ENCODE measurements at regions of chr17 and their contacts with region 1.

Region 1: GRCh38 chr17:76506408-76507349 is 5.5 kb upstream of the RHBDF2 start:
- DNase-seq: peak; percentile 90
- H3K4me3 ChIP-seq: no peak overlapping the region
- H3K27ac ChIP-seq: peak overlapping the region; percentile 31
- H3K4me1 ChIP-seq: peaks cover 48% of the 10 kb centered on the region
- CTCF ChIP-seq: peak; percentile 100

Region 2: GRCh38 chr17:76304226-76305134 is 202.2 kb before region 1 on chr17:
- CTCF ChIA-PET with region 1: no interaction called
- POLR2A ChIA-PET with region 1: no interaction called
- intact Hi-C with region 1: loop called (anchors 1 kb)
- DNase-seq: no peak
- H3K4me3 ChIP-seq: no peak overlapping the region
- H3K27ac ChIP-seq: no peak overlapping the region
- H3K4me1 ChIP-seq: peaks cover 5% of the 10 kb centered on the region
- CTCF ChIP-seq: no peak

Region 3: DNA sequence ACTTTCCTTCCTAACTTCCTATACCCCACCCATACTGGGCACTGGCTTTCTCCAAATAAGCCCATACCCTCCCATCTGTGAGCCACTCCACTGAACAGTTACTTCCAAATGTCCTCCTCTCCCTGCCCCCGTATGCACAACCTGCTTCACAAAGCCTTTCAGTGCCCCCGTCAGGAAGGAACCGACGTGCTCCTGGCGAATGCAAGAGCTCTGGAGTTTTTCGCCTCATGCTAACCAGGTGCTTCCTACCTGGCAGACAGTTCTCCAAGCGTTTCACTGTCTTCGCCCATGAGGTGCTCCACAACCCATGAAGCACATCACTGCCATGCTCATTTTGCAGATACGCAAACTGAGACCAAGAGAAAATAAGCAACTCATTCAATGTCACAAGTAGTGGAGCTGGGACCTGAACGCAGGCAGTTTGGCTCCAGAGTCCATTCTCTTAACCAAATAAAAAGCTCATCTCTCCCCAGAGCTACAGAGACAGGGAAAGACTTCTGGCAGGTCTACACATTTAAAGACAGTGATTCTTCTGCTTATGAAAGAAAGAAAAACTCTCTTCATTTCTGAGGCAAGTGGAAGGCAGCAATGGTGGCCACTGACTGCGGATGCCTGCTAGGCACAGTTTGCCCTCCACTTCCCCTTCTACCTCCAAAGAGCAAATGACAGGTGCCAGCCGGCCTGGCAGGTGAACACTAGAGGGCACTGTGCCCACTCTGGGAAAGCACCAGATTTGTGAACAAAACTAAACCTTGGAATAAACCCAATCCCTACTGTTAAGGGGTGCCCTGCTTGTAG is 98.4 kb before region 1 on chr17:
- CTCF ChIA-PET with region 1: interaction called, 4 read pairs
- POLR2A ChIA-PET with region 1: interaction called, 14 read pairs
- intact Hi-C with region 1: loop called (anchors 1 kb)
- DNase-seq: peak; percentile 89
- H3K4me3 ChIP-seq: no peak overlapping the region
- H3K27ac ChIP-seq: peak overlapping the region; percentile 1
- H3K4me1 ChIP-seq: peaks cover 48% of the 10 kb centered on the region
- CTCF ChIP-seq: peak; percentile 100

Region 4: DNA sequence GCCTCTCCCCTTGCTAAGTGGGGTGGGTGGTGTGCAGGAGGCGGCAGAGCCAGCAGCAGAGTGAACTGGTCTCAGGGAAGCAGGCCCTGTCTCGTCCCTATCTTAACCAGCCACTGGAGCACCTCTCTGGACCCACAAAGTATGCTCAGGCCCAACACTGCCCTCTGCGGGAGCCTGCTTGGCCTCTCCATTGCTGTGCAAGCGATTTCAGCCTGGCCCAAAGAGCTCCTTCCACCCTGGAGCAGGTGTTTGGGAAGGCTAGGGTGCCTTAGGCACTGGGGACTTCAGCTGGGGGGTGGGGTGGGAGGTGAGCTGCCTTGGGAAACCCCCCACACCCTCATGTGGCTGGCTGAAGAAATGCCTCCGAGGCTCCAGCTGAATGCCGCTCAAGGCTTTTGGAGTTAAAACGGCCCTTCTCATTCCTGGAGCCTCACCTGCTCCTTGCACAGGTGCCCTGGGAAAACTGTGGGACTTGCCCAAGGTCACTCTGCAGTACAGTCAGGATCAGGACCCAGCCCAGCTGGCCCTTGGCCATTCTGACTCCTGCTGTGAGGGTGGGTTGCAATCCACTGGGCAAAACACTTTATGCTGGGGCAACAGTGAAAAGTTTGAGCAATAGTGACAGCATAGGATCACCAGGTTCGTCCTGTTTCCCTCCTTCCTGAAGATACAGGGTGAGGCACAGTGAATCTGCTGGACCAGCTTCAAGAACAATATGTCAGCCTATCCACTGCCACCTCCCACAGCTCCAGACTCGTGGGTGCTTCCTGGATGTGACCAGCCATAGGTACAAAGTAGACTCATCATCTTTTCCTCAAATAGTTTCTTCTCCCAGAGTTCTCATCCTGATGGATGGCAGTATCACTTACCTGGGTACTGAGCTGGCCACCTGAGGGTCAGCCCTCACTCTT is 47.8 kb before region 1 on chr17:
- CTCF ChIA-PET with region 1: interaction called, 28 read pairs
- POLR2A ChIA-PET with region 1: interaction called, 13 read pairs
- intact Hi-C with region 1: loop called (anchors 1 kb)
- DNase-seq: peak; percentile 88
- H3K4me3 ChIP-seq: no peak overlapping the region
- H3K27ac ChIP-seq: no peak overlapping the region
- H3K4me1 ChIP-seq: peaks cover 17% of the 10 kb centered on the region
- CTCF ChIP-seq: peak; percentile 95

Region 5: GRCh38 chr17:76467366-76467765 is 39.3 kb before region 1 on chr17 and contains the start of gene AANAT:
- CTCF ChIA-PET with region 1: interaction called, 12 read pairs
- POLR2A ChIA-PET with region 1: interaction called, 7 read pairs
- intact Hi-C with region 1: loop called (anchors 1 kb)
- DNase-seq: no peak
- H3K4me3 ChIP-seq: no peak within 1 kb of the TSS
- H3K27ac ChIP-seq: peak within 1 kb of the TSS; percentile 38
- H3K4me1 ChIP-seq: peaks cover 35% of the 10 kb centered on the region
- CTCF ChIP-seq: no peak
- total RNA-seq, gene AANAT: not detected in 2 replicates

Region 6: GRCh38 chr17:76547184-76547641 is 40.5 kb after region 1 on chr17:
- CTCF ChIA-PET with region 1: no interaction called
- POLR2A ChIA-PET with region 1: no interaction called
- intact Hi-C with region 1: loop called (anchors 5 kb)
- DNase-seq: peak; percentile 91
- H3K4me3 ChIP-seq: no peak overlapping the region
- H3K27ac ChIP-seq: no peak overlapping the region
- H3K4me1 ChIP-seq: peaks cover 19% of the 10 kb centered on the region
- CTCF ChIP-seq: peak; percentile 99

Region 7: DNA sequence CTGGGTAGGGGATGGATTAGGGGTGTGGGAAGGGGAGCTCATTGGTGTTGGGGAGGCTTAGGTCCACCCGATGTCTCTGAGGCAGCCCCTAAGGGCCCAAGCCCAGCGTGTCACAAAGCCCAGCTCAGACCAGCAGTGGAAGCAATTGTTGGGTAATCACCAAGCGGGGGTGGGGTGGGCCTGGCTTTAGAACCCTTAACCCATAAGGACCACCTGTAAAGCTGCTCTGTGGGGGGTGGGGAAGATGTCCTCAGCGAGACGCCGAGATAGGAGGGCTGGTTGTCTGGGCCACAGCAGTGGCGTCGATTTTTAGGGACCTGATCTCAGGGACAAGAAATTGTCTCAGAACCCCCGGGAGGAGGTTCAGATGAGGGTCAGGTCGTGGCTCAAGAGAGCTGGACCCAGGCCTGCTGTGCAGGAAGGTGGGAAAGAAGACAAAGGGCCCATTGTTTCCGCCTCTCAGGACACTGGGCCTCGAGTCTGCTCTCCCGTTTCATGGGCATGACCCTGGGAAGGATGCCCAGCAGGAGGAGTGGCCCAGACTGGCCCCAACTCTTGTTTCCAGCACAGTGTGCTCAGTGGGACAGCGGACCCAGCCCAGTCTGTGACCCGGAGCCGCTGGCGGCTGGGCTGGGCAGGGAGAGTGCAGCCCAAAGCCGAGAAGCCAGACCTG is 63.1 kb after region 1 on chr17:
- CTCF ChIA-PET with region 1: no interaction called
- POLR2A ChIA-PET with region 1: no interaction called
- intact Hi-C with region 1: no loop called
- DNase-seq: no peak
- H3K4me3 ChIP-seq: no peak overlapping the region
- H3K27ac ChIP-seq: no peak overlapping the region
- H3K4me1 ChIP-seq: peaks cover 29% of the 10 kb centered on the region
- CTCF ChIP-seq: no peak